Adrenal gland (tissue), 19 donors: ENCODE measurements at regions of chr9 and their contacts with region 1.

Region 1: GRCh38 chr9:14779566-14780022 is 57.1 kb upstream of the CER1 start:
- DNase-seq: peak in 6 of 7 donors; percentile 11 to 55 (median 18)
- H3K4me3 ChIP-seq: no peak overlapping the region
- H3K27ac ChIP-seq: peak overlapping the region in 1 of 5 donors; percentile 58
- H3K4me1 ChIP-seq: peaks cover 0 to 8% of the 10 kb centered on the region in 2 donors
- H3K27me3 ChIP-seq: no peaks in the 10 kb centered on the region
- CTCF ChIP-seq: no peak
- POLR2A ChIP-seq: no peak

Region 2: DNA sequence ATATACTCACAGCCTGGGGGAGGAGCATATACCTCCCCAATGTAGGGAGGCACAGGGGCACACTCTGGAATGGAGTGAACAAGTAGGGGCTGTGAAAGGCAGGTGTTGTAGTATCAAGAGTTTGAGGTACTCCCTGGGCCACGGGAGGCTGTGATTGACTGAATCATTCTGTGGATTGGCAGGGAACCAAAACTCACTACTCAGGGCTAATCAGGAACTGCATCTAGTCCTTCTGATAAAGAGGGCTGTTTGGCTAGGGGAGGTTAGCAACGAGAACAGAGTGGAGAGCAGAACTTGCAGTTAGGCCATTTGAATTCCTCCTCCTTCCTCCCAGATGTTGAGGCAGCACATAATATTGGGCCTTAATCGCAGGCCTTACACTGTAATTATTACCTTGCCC is 1130.9 kb before region 1 on chr9:
- intact Hi-C with region 1: no loop called
- DNase-seq: no peak
- H3K4me3 ChIP-seq: no peak overlapping the region
- H3K27ac ChIP-seq: no peak overlapping the region
- H3K4me1 ChIP-seq: no peaks in the 10 kb centered on the region
- H3K27me3 ChIP-seq: no peaks in the 10 kb centered on the region
- CTCF ChIP-seq: no peak
- POLR2A ChIP-seq: no peak

Region 3: DNA sequence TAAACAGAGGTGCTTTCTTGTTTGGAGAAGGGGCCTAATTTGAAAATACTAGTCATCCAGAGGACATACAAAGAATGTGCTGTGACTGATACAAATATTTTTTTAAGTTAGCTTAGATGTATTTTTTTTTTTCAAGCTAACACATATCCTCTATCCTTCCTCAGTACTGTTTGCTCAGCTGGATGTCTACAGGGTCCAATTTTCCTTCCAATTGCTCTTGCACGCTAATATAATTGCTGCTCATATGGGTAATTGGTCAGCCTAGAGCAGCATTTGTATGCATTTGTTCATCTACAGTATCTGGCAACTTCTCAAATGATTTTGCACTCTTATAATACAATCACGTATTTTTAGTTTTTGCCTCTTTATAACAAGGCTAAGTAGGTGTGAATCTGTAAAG is 171.1 kb before region 1 on chr9:
- intact Hi-C with region 1: loop called in 1 of 2 experiments (anchors 10 kb)
- DNase-seq: no peak
- H3K4me3 ChIP-seq: no peak overlapping the region
- H3K27ac ChIP-seq: no peak overlapping the region
- H3K4me1 ChIP-seq: no peaks in the 10 kb centered on the region
- H3K27me3 ChIP-seq: no peaks in the 10 kb centered on the region
- CTCF ChIP-seq: no peak
- POLR2A ChIP-seq: no peak

Region 4: GRCh38 chr9:14741369-14741768 is 38.2 kb before region 1 on chr9:
- intact Hi-C with region 1: no loop called
- DNase-seq: no peak
- H3K4me3 ChIP-seq: no peak overlapping the region
- H3K27ac ChIP-seq: no peak overlapping the region
- H3K4me1 ChIP-seq: no peaks in the 10 kb centered on the region
- H3K27me3 ChIP-seq: no peaks in the 10 kb centered on the region
- CTCF ChIP-seq: no peak
- POLR2A ChIP-seq: no peak

Region 5: DNA sequence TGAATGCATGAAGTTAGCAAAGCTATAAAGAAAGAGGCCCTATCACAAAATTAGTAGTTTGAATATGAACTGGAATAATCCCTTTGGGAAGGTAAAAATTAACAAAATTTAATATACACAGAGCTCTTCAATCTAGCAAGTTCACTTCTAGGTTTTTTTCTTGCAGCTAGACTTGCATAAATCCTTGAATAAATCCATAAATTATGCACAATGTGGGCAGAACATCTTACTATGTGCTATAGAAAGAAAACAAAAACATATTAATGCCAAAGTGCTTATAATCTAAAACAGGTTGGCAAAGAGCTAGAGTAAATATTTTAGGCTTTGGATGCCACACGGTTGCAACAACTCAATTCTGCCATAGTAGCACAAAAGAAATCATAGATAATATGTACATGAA is 269.2 kb after region 1 on chr9:
- intact Hi-C with region 1: no loop called
- DNase-seq: no peak
- H3K4me3 ChIP-seq: no peak overlapping the region
- H3K27ac ChIP-seq: no peak overlapping the region
- H3K4me1 ChIP-seq: no peaks in the 10 kb centered on the region
- H3K27me3 ChIP-seq: no peaks in the 10 kb centered on the region
- CTCF ChIP-seq: no peak
- POLR2A ChIP-seq: no peak